SK-N-SH (cell line): ENCODE measurements at regions of chr1 and their contacts with region 1.

Region 1: GRCh38 chr1:39609618-39610331 is 29.7 kb downstream of the HEYL start:
- DNase-seq: peak; percentile 65
- H3K4me3 ChIP-seq: no peak overlapping the region
- H3K27ac ChIP-seq: no peak overlapping the region
- H3K4me1 ChIP-seq: no peaks in the 10 kb centered on the region; a peak in 1 of 4 replicates
- H3K27me3 ChIP-seq: no peaks in the 10 kb centered on the region
- CTCF ChIP-seq: peak; percentile 52
- EP300 ChIP-seq: no peak
- RAD21 ChIP-seq: no peak

Region 2: GRCh38 chr1:39625462-39626273 is 15.9 kb after region 1 on chr1:
- CTCF ChIA-PET with region 1: interaction called, 23 read pairs
- POLR2A ChIA-PET with region 1: no interaction called
- DNase-seq: peak; percentile 60
- H3K4me3 ChIP-seq: no peak overlapping the region
- H3K27ac ChIP-seq: peak overlapping the region in 1 of 2 experiments; percentile 70; a peak in 2 of 4 replicates
- H3K4me1 ChIP-seq: peaks cover 0 to 29% of the 10 kb centered on the region in 2 experiments; a peak in 1 of 4 replicates
- H3K27me3 ChIP-seq: peaks cover 4% of the 10 kb centered on the region
- CTCF ChIP-seq: no peak
- EP300 ChIP-seq: no peak
- RAD21 ChIP-seq: no peak

Region 3: DNA sequence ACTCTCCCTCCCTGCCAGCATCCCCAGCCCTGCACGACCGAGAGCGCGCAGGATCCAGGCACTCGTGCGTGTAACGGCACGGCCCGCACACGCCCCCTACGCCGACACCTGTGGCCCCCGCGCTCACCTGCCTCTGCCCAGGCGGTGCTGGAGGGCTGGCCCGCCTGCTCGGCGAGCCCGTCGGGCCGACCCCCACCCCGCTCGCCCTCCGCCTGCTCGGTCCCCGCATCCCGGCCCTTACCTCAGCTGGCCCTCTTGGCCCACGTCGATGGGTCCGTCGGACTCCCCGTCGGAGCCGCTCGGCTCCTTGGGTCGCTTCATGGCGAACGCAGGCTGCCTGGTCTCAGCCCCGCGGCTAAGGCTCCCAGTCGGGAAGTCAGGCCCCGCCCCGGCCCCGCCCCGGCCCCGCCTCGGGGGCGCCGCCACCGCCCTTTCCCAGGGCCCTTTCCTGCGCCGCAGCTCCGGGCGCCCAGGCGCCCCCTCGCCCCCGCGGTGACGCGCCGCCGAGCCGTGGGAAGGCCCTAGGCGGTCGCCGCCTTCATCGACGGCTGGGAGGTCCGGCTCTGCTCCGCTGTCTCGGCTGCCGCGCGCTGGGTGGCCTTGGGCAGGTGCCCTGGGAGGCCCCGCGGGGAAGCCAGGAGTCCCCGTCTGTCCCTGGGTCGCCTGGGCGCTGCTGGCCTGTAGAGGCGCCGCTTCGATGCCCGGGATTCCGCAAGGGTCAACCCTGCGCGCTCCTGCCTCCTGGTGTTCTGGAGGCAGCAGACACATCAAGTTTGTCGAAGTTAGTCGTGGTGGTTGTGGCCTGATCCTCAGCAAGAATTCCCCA is 29.7 kb after region 1 on chr1 and contains the start of gene HEYL:
- CTCF ChIA-PET with region 1: interaction called, 22 read pairs
- POLR2A ChIA-PET with region 1: no interaction called
- DNase-seq: no peak
- H3K4me3 ChIP-seq: no peak within 1 kb of the TSS
- H3K27ac ChIP-seq: no peak within 1 kb of the TSS; a peak in 1 of 4 replicates
- H3K4me1 ChIP-seq: peaks cover 4 to 21% of the 10 kb centered on the region in 2 experiments; a peak in 3 of 4 replicates
- H3K27me3 ChIP-seq: no peaks in the 10 kb centered on the region
- CTCF ChIP-seq: no peak
- EP300 ChIP-seq: no peak
- RAD21 ChIP-seq: no peak
- polyA plus RNA-seq, gene HEYL: not detected in 2 replicates

Region 4: GRCh38 chr1:39691262-39692151 is 81.7 kb after region 1 on chr1 and contains the start of gene HPCAL4:
- CTCF ChIA-PET with region 1: interaction called, 17 read pairs
- POLR2A ChIA-PET with region 1: no interaction called
- DNase-seq: peak; percentile 96
- H3K4me3 ChIP-seq: peak within 1 kb of the TSS; percentile 49 to 73
- H3K27ac ChIP-seq: peak within 1 kb of the TSS in 1 of 2 experiments; percentile 67; a peak in 1 of 4 replicates
- H3K4me1 ChIP-seq: peaks cover 0 to 32% of the 10 kb centered on the region in 2 experiments; a peak in 2 of 4 replicates
- H3K27me3 ChIP-seq: peaks cover 45% of the 10 kb centered on the region
- CTCF ChIP-seq: no peak
- EP300 ChIP-seq: no peak
- RAD21 ChIP-seq: no peak
- polyA plus RNA-seq, gene HPCAL4: 0.15 and 0.55 TPM in 2 replicates

Region 5: DNA sequence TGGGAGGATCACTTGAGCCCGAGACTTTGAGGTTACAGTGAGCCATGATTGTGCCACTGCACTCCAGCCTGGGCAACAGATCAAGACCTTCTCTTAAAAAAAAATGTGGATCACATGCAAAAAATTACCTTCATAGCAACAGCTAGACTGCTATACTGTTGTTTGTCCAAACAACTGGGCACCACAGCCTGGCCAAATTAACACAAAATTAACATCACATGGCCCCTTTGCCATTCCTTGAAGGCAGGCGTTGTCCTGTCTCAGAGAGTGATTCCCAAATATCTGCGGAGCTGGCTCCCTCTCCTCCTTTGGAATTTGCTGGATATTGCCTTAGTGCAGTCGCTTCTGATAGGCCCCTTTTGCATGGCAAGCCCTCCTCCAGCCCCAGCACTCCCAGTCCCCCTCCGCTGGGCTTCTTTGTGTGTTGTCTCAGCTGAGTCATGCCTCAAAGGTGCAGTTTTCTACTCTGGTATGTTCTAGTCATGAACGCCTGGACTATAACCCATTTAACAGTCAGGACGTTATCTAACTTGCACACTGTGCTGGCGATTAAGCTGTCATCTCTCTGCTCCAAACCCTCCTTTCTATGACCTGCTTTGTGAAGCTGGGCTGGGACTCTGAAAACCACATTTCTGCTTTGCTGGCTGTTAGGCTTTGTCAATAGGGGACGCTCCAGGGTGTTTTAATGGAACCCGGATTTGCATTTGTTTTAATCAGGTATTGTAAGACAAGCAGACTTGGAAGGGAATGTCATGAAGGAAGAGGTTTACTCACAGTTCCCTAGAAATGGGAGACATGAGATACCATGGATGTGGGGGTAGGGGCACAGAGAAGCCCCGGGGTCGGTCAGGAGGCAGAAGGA is 101.6 kb after region 1 on chr1:
- CTCF ChIA-PET with region 1: interaction called, 30 read pairs
- POLR2A ChIA-PET with region 1: no interaction called
- DNase-seq: no peak
- H3K4me3 ChIP-seq: no peak overlapping the region
- H3K27ac ChIP-seq: no peak overlapping the region
- H3K4me1 ChIP-seq: peaks cover 0 to 6% of the 10 kb centered on the region in 2 experiments; a peak in 1 of 4 replicates
- H3K27me3 ChIP-seq: peaks cover 15% of the 10 kb centered on the region
- CTCF ChIP-seq: no peak
- EP300 ChIP-seq: no peak
- RAD21 ChIP-seq: no peak

Region 6: DNA sequence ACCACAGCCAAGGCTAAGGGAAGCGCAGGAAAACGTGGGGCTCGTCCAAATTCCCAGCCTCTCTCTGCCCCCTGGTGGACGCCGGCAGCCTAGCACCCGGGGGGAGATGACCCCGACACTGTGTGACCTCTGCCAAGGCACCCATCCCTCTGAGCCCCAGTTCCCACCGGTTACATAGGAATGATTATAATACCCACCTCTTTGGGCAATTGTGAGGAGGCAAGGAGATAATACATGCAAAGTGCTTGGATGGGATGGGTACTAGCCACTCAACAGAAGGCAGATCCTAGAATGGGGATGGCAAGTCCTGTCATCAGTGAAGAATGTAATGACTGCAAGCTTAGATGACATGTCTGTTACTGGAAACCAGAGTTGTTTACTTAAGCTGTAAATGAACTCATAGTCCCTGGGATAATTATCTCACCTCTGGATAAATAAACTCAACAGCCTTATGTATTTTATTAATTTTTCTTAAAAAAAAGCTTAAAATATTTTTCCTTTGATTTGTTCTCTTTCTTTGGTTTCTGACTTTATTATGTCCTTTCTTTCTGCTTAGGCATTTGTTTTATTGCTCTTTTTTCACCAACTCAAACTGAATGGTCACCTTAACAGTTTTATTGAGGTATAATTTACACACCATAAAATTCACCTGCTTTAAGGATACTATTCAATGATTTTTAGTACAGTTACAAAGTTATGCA is 190.1 kb after region 1 on chr1:
- CTCF ChIA-PET with region 1: interaction called, 23 read pairs
- POLR2A ChIA-PET with region 1: no interaction called
- DNase-seq: peak; percentile 92
- H3K4me3 ChIP-seq: peak overlapping the region in 1 of 2 experiments; percentile 33; a peak in 1 of 4 replicates
- H3K27ac ChIP-seq: no peak overlapping the region; a peak in 1 of 4 replicates
- H3K4me1 ChIP-seq: no peaks in the 10 kb centered on the region; a peak in 1 of 4 replicates
- H3K27me3 ChIP-seq: no peaks in the 10 kb centered on the region
- CTCF ChIP-seq: peak; percentile 86
- EP300 ChIP-seq: no peak
- RAD21 ChIP-seq: peak; percentile 63